ENCODE measurements at regions of chr15 and their contacts with region 1.

Region 1: GRCh38 chr15:100224206-100225185 is 117.3 kb downstream of the ADAMTS17 start:
- DNase-seq: no peak
- ATAC-seq: no peak
- H3K4me3 ChIP-seq: no peak overlapping the region
- H3K27ac ChIP-seq: no peak overlapping the region
- H3K4me1 ChIP-seq: peaks cover 8% of the 10 kb centered on the region in 2 donors
- H3K27me3 ChIP-seq: no peaks in the 10 kb centered on the region
- CTCF ChIP-seq: no peak
- POLR2A ChIP-seq: no peak

Region 2: GRCh38 chr15:99951511-99951910 is 273.0 kb before region 1 on chr15:
- in situ Hi-C with region 1: no loop called
- intact Hi-C with region 1: no loop called
- DNase-seq: no peak
- ATAC-seq: no peak
- H3K4me3 ChIP-seq: no peak overlapping the region
- H3K27ac ChIP-seq: no peak overlapping the region
- H3K4me1 ChIP-seq: no peaks in the 10 kb centered on the region
- H3K27me3 ChIP-seq: no peaks in the 10 kb centered on the region
- CTCF ChIP-seq: no peak
- POLR2A ChIP-seq: no peak

Region 3: GRCh38 chr15:100159436-100159835 is 65.1 kb before region 1 on chr15:
- in situ Hi-C with region 1: no loop called
- intact Hi-C with region 1: no loop called
- DNase-seq: no peak
- ATAC-seq: no peak
- H3K4me3 ChIP-seq: no peak overlapping the region
- H3K27ac ChIP-seq: no peak overlapping the region
- H3K4me1 ChIP-seq: no peaks in the 10 kb centered on the region
- H3K27me3 ChIP-seq: no peaks in the 10 kb centered on the region
- CTCF ChIP-seq: no peak
- POLR2A ChIP-seq: no peak

Region 4: DNA sequence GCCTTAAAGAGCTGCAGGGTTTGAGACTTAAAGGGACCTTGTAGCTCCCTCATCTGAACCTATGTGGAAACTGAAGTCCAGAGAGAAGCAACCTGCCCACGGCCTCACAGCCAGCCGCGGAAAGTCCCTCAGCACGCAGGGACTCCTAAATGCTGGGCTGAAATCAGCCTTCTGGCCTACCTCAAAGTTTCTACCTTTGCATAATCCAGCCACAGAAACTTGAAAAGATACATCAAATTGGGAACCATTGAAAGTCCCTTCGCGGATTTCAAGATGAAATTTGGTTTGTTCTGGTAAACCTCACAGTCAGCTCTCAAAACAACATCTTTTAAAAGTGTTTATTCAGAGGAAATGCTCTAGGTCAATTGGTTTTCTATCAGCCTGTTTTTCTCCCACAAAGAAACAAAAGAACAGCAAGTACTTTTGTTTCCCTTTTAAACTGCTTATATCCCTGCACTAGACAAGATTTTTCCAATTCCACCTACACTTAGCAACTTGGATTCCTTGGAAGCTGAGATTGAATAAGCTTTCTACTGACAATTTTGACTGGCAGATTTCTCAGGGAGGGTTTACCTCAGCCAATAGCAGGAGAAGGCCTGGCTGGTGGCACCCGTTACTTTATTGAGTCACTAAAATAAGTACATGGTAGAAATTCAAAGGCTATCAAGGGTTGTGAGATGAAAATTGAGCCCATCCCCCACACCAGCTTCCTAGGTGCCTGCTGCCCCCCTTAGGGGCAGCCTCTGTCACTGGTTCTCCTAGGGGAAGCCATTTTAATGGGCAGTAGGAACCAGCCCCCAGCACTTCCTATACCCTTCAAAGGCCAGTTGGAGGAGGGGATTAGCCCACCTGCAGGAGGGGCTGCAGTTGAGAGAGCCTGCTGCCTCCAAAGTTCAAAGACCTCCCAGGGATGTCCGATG is 53.9 kb before region 1 on chr15:
- in situ Hi-C with region 1: no loop called
- intact Hi-C with region 1: loop called (anchors 5 kb)
- DNase-seq: no peak
- ATAC-seq: no peak
- H3K4me3 ChIP-seq: no peak overlapping the region
- H3K27ac ChIP-seq: no peak overlapping the region
- H3K4me1 ChIP-seq: peaks cover 16 to 21% of the 10 kb centered on the region in 2 donors
- H3K27me3 ChIP-seq: no peaks in the 10 kb centered on the region
- CTCF ChIP-seq: no peak
- POLR2A ChIP-seq: no peak

Region 5: GRCh38 chr15:100863796-100864267 is 639.3 kb after region 1 on chr15:
- in situ Hi-C with region 1: no loop called
- intact Hi-C with region 1: no loop called
- DNase-seq: peak; percentile 19 to 69
- ATAC-seq: peak; percentile 56 to 60
- H3K4me3 ChIP-seq: no peak overlapping the region
- H3K27ac ChIP-seq: peak overlapping the region in 2 of 4 donors; percentile 11 to 33
- H3K4me1 ChIP-seq: no peaks in the 10 kb centered on the region
- H3K27me3 ChIP-seq: peaks cover 7 to 18% (median 14%) of the 10 kb centered on the region in 3 donors
- CTCF ChIP-seq: no peak
- POLR2A ChIP-seq: no peak

Region 6: GRCh38 chr15:100902436-100903167 is 678.1 kb after region 1 on chr15:
- in situ Hi-C with region 1: no loop called
- intact Hi-C with region 1: no loop called
- DNase-seq: peak; percentile 29 to 58
- ATAC-seq: peak; percentile 75 to 82
- H3K4me3 ChIP-seq: peak overlapping the region; percentile 41 to 48 (median 44)
- H3K27ac ChIP-seq: peak overlapping the region; percentile 63 to 73 (median 70)
- H3K4me1 ChIP-seq: peaks cover 22 to 41% of the 10 kb centered on the region in 2 donors
- H3K27me3 ChIP-seq: no peaks in the 10 kb centered on the region
- CTCF ChIP-seq: no peak
- POLR2A ChIP-seq: no peak